IMR-90 (cell line): ENCODE measurements at regions of chr2 and their contacts with region 1.

Region 1: GRCh38 chr2:231715258-231715997 is 7.1 kb downstream of the PTMA start:
- DNase-seq: no peak
- ATAC-seq: no peak; the same call in none of the 2 replicates
- H3K4me3 ChIP-seq: no peak overlapping the region
- H3K27ac ChIP-seq: peak overlapping the region; percentile 0; the same call in 1 of the 2 replicates
- H3K4me1 ChIP-seq: peaks cover 26% of the 10 kb centered on the region
- H3K27me3 ChIP-seq: no peaks in the 10 kb centered on the region
- CTCF ChIP-seq: peak; percentile 67
- POLR2A ChIP-seq: no peak
- RAD21 ChIP-seq: peak; percentile 60

Region 2: DNA sequence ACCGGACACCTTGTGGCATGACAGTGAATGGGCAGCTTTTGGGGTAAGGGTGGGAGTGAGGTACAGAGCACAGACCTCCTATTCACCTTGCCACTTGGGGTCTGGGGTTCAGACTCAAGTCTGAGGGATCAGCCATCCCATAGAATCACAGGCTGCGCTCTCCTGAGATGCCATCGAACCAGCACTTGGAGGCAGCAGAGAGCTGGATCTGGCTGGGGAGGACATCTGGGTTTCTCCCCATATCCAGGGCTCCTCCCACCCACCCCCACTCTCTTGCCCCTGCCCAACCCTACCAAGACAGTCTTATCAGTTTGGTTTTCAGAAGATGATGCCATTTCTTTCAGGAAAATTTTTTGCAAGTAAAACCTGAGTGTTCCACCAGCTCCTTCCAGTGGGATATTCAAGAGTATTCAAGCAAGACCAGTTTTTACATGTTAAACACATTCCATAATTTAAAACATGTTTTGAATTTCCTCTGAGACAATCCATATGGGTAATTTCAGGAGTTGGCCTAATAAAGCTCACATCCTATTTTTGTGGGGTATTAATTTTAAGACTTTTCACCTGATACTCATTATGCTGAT is 152.0 kb before region 1 on chr2:
- CTCF ChIA-PET with region 1: interaction called, 3 read pairs
- POLR2A ChIA-PET with region 1: no interaction called
- dilution Hi-C with region 1: no loop called
- in situ Hi-C with region 1: no loop called
- intact Hi-C with region 1: loop called (anchors 5 kb)
- DNase-seq: peak; percentile 57
- ATAC-seq: peak; percentile 100
- H3K4me3 ChIP-seq: no peak overlapping the region
- H3K27ac ChIP-seq: no peak overlapping the region
- H3K4me1 ChIP-seq: no peaks in the 10 kb centered on the region
- H3K27me3 ChIP-seq: peaks cover 4% of the 10 kb centered on the region; the same call in 1 of the 2 replicates
- CTCF ChIP-seq: peak; percentile 80
- POLR2A ChIP-seq: no peak
- RAD21 ChIP-seq: peak; percentile 78

Region 3: GRCh38 chr2:231648587-231649174 is 66.7 kb before region 1 on chr2:
- CTCF ChIA-PET with region 1: no interaction called
- POLR2A ChIA-PET with region 1: no interaction called
- dilution Hi-C with region 1: no loop called
- in situ Hi-C with region 1: no loop called
- intact Hi-C with region 1: loop called (anchors 1 kb)
- DNase-seq: peak; percentile 50
- ATAC-seq: peak; percentile 95
- H3K4me3 ChIP-seq: no peak overlapping the region
- H3K27ac ChIP-seq: no peak overlapping the region
- H3K4me1 ChIP-seq: no peaks in the 10 kb centered on the region
- H3K27me3 ChIP-seq: no peaks in the 10 kb centered on the region
- CTCF ChIP-seq: peak; percentile 71
- POLR2A ChIP-seq: no peak
- RAD21 ChIP-seq: peak; percentile 84

Region 4: DNA sequence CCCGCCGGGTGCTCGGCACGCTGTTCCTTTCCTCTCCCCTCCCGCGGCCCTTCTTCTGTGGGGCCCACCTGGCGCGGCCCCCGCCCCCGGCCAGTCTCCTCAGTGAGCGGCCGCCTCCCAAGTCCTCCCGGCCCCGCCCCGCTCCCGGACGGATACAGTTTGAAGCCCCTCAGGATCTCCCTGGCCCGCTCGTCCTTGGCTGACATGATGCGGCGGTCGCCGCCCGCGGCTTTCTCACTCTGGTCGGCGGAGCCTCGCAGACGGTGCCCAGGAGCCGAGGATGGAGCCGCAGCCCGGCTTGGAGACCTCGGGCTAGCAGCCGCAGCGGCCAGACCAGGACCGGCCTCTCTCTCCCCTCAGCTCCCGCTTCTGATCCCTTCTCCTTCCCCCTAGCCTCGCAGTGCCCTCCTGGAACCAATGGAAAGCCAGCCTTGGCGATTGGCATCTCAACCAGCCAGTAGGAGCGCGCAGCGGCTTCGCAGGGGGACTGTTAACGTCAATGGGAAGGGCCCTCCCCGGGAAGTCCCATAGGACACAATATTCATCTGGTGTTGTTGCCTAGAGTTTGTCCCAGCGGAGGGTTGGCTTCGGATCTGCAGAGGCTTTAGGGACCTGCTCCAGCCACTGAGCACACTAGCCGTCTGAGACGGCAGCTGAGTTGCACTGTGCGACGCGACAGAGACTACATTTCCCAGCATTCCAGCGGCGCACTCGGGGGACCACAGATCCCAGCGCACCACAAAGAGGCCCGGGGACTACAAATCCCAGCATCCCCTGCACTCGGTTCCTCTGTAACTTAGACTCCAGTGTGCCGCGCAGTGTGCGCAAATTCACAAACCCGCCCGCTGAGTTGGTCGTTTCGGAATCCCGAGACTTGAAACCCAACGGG is 65.7 kb after region 1 on chr2 and contains the start of gene PDE6D:
- CTCF ChIA-PET with region 1: interaction called, 5 read pairs
- POLR2A ChIA-PET with region 1: no interaction called
- dilution Hi-C with region 1: no loop called
- in situ Hi-C with region 1: no loop called
- intact Hi-C with region 1: loop called (anchors 2 kb)
- DNase-seq: peak; percentile 99
- ATAC-seq: peak; percentile 97
- H3K4me3 ChIP-seq: peak within 1 kb of the TSS; percentile 60
- H3K27ac ChIP-seq: peak within 1 kb of the TSS; percentile 31
- H3K4me1 ChIP-seq: peaks cover 7% of the 10 kb centered on the region
- H3K27me3 ChIP-seq: no peaks in the 10 kb centered on the region
- CTCF ChIP-seq: no peak
- POLR2A ChIP-seq: peak; percentile 69; the same call in 1 of the 2 replicates
- RAD21 ChIP-seq: no peak
- total RNA-seq, gene PDE6D: 13.6 and 13.8 TPM in 2 replicates